Activated B cell treated with CpG ODN at 0.5 μM for 24 hours (primary cell): ENCODE measurements at regions of chr4 and their contacts with region 1.

Region 1: GRCh38 chr4:173257732-173258717 is 76.1 kb downstream of the HMGB2 start:
- DNase-seq: no peak
- ATAC-seq: peak; percentile 92
- H3K4me3 Mint-ChIP-seq: no peak overlapping the region
- H3K27ac Mint-ChIP-seq: no peak overlapping the region
- H3K4me1 Mint-ChIP-seq: peaks cover 23% of the 10 kb centered on the region
- H3K27me3 Mint-ChIP-seq: no peaks in the 10 kb centered on the region
- CTCF ChIP-seq: no peak

Region 2: GRCh38 chr4:172830295-172830764 is 427.7 kb before region 1 on chr4:
- CTCF ChIA-PET with region 1: no interaction called
- POLR2A ChIA-PET with region 1: no interaction called
- intact Hi-C with region 1: loop called (anchors 5 kb)
- DNase-seq: no peak
- ATAC-seq: no peak
- H3K4me3 Mint-ChIP-seq: no peak overlapping the region
- H3K27ac Mint-ChIP-seq: no peak overlapping the region
- H3K4me1 Mint-ChIP-seq: no peaks in the 10 kb centered on the region
- H3K27me3 Mint-ChIP-seq: no peaks in the 10 kb centered on the region
- CTCF ChIP-seq: peak; percentile 81

Region 3: DNA sequence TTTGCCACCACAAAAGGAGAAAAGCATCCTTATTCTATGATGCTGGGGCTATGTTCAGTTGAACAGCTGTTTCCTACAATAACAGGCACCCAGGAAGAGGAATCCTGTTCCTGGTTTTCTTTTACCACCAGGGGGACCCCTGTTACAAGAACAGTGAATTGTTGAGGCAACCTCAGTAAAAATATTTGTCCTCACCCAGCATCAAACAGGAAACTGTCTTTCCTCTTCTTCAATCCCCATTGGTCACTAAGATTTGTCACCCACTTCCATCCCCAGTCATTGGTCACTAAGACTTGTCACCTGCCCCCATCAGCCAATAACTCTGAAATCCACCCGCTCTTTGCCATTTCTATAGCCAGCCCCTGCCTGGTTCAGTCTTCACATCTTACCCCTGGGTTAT is 232.9 kb before region 1 on chr4:
- CTCF ChIA-PET with region 1: interaction called, 47 read pairs
- POLR2A ChIA-PET with region 1: no interaction called
- intact Hi-C with region 1: loop called (anchors 1 kb)
- DNase-seq: no peak
- ATAC-seq: no peak
- H3K4me3 Mint-ChIP-seq: no peak overlapping the region
- H3K27ac Mint-ChIP-seq: no peak overlapping the region
- H3K4me1 Mint-ChIP-seq: peaks cover 3% of the 10 kb centered on the region
- H3K27me3 Mint-ChIP-seq: no peaks in the 10 kb centered on the region
- CTCF ChIP-seq: no peak

Region 4: GRCh38 chr4:173192375-173193162 is 65.5 kb before region 1 on chr4:
- CTCF ChIA-PET with region 1: interaction called, 11 read pairs
- POLR2A ChIA-PET with region 1: no interaction called
- intact Hi-C with region 1: loop called (anchors 1 kb)
- DNase-seq: no peak
- ATAC-seq: no peak
- H3K4me3 Mint-ChIP-seq: no peak overlapping the region
- H3K27ac Mint-ChIP-seq: no peak overlapping the region
- H3K4me1 Mint-ChIP-seq: peaks cover 45% of the 10 kb centered on the region
- H3K27me3 Mint-ChIP-seq: no peaks in the 10 kb centered on the region
- CTCF ChIP-seq: no peak

Region 5: GRCh38 chr4:173334085-173334772 is 76.2 kb after region 1 on chr4 and contains the start of gene HMGB2:
- CTCF ChIA-PET with region 1: no interaction called
- POLR2A ChIA-PET with region 1: no interaction called
- intact Hi-C with region 1: no loop called
- DNase-seq: peak; percentile 95
- ATAC-seq: peak; percentile 93
- H3K4me3 Mint-ChIP-seq: peak within 1 kb of the TSS; percentile 96
- H3K27ac Mint-ChIP-seq: peak within 1 kb of the TSS; percentile 98
- H3K4me1 Mint-ChIP-seq: peaks cover 25% of the 10 kb centered on the region
- H3K27me3 Mint-ChIP-seq: no peaks in the 10 kb centered on the region
- CTCF ChIP-seq: no peak
- total RNA-seq, gene HMGB2: 63.2 and 63.9 TPM in 2 replicates